IMR-90 (cell line): ENCODE measurements at regions of chr1 and their contacts with region 1.

Region 1: DNA sequence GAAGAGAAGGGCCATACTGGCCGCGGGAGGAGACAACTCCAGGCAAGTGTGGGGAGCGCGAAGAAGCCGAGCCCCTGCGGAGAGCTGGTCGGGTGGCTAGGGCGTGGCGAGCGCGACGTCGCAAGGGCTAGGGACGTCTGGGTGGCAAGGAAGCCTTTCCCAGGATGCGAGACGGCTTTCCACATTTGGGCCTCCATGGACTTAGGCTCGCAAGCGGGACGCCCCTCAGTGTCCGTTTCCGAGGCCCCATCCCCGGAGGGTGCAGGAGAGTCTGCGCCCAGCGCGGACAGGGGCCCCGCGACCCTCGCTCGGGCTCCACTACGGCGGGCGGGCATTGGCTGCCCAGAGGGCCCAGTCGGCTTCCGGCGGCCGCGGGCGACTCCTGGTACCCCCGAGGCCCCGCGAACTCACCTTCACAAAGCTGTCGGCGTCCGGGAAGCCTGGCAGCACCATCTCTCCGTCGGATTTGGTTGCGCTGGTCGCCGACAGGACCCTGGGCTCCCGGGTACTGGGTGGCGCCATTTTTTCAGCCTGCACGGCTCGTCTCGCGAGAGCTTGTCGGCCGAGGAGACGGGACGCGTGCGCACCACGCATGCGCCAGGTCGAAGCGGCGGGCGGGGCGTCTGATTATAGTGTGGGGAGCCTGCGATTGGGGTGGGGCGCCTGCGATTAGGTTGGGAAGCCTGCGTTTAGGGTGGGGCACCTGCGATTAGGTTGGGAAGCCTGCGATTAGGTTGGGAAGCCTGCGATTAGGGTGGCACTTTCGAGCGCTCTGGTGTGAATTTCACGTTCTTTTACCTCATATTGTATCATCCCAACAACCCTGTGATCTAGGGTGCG is at the start of gene EXOSC10:
- DNase-seq: peak; percentile 77
- ATAC-seq: peak; percentile 99
- H3K4me3 ChIP-seq: peak within 1 kb of the TSS; percentile 81
- H3K27ac ChIP-seq: peak within 1 kb of the TSS; percentile 85
- H3K4me1 ChIP-seq: 0 out of 2 replicates have a peak, but pooled peaks cover 2% of the 10 kb centered on the region
- H3K27me3 ChIP-seq: no peaks in the 10 kb centered on the region
- CTCF ChIP-seq: no peak
- POLR2A ChIP-seq: peak; percentile 67; the same call in 1 of the 2 replicates
- RAD21 ChIP-seq: no peak
- total RNA-seq, gene EXOSC10: 56.4 and 64.5 TPM in 2 replicates

Region 2: DNA sequence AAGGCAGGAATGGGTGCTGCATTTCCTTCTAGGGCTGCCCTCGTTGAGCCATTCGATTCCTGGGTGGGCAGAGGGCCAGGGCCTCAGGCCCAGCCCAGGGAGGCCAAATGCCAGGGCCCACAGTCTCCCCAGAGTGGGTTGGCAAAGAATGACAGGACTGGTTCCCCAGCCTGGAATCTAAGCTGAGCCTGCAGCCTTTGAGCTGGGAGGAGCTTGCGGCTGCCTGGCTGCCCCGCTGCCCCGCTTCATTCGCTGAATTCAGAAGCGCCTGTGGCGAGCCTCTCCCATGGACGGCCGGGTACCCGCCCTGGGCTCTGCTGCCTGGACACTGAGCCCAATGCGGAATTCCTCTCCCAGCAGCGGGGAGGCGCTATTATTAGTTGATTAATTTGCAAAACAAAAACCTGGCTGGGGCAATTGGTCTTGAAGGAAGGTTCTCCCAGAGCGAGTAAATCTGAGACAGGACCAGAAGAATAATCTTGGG is 119.4 kb before region 1 on chr1:
- CTCF ChIA-PET with region 1: no interaction called
- POLR2A ChIA-PET with region 1: no interaction called
- dilution Hi-C with region 1: no loop called
- in situ Hi-C with region 1: no loop called
- intact Hi-C with region 1: no loop called
- DNase-seq: peak; percentile 31
- ATAC-seq: peak; percentile 88
- H3K4me3 ChIP-seq: no peak overlapping the region
- H3K27ac ChIP-seq: no peak overlapping the region
- H3K4me1 ChIP-seq: peaks cover 1% of the 10 kb centered on the region; the same call in 1 of the 2 replicates
- H3K27me3 ChIP-seq: peaks cover 14% of the 10 kb centered on the region
- CTCF ChIP-seq: peak; percentile 32; the same call in 1 of the 2 replicates
- POLR2A ChIP-seq: no peak
- RAD21 ChIP-seq: no peak

Region 3: DNA sequence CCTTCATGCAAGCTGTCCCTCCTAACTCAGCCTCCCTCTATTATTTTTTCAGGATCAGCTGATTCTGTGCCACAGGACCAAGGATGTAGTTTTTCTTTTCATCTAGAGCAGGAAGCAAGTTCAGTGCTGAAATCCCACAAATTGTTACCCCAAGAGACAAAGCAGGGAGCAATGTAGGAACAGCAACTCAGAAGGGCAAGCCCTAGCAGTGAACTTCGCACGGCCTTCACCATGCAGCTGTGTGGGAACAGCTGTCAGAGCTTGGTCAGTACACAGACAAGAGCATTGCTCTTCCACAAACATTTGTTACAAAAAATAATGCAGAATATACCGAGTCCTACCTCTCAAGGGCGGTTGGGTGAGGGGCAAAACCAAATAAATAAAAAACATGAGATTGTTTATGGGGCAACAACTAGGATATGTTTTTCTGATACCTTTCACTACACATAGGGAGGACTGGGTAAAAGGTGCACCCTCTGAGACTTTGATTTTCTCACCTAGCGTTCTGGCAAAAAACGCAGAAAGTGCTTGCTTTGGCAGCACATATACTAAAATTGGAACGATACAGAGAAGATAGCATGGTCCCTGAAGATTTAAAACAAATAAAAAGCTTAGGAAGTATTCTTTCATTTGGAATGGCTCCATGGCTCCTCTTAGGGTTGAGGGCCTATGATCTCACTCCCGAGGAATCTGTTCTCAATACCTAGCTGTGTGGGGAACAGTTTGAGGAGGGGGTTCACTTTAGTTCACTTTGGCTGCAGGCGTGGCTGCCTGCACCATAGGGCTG is 52.5 kb after region 1 on chr1:
- CTCF ChIA-PET with region 1: no interaction called
- POLR2A ChIA-PET with region 1: no interaction called
- dilution Hi-C with region 1: no loop called
- in situ Hi-C with region 1: no loop called
- intact Hi-C with region 1: loop called (anchors 5 kb)
- DNase-seq: no peak
- ATAC-seq: peak; percentile 39; the same call in 1 of the 2 replicates
- H3K4me3 ChIP-seq: no peak overlapping the region
- H3K27ac ChIP-seq: no peak overlapping the region
- H3K4me1 ChIP-seq: peaks cover 5% of the 10 kb centered on the region
- H3K27me3 ChIP-seq: no peaks in the 10 kb centered on the region
- CTCF ChIP-seq: no peak
- POLR2A ChIP-seq: no peak
- RAD21 ChIP-seq: no peak

Region 4: DNA sequence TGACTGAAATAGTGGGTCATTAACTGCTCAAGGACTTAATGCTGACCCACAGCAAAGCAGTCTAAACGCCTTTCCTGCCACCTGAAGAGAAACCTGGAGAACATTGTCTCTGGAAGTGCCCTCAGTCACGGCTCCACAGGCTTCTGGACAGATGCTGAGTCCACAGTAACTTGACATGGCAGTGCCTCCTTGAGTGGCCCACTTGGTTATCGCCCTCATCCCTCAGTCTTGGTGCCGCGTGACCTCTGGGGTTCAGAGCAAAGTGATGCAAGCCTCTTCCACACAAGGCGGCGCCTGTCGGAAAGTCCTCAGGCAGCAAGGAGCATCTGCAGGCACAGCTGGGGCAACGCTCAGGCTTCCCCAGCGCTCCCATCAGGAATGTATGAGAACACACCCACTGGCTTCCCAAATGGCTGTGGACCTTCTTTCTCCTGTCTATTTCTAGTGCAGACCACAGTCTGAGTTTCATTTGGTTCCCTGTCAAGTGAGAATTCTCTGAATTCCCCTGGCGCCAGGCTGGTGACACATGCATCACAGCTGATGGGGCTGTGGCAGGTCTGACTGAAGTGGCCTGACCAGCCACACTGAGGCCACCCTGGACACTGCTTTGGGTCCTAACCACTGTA is 76.7 kb after region 1 on chr1:
- CTCF ChIA-PET with region 1: no interaction called
- POLR2A ChIA-PET with region 1: interaction called, 19 read pairs
- dilution Hi-C with region 1: no loop called
- in situ Hi-C with region 1: no loop called
- intact Hi-C with region 1: no loop called
- DNase-seq: peak; percentile 33
- ATAC-seq: peak; percentile 21; the same call in 1 of the 2 replicates
- H3K4me3 ChIP-seq: no peak overlapping the region
- H3K27ac ChIP-seq: no peak overlapping the region
- H3K4me1 ChIP-seq: peaks cover 17% of the 10 kb centered on the region
- H3K27me3 ChIP-seq: no peaks in the 10 kb centered on the region
- CTCF ChIP-seq: no peak
- POLR2A ChIP-seq: no peak
- RAD21 ChIP-seq: no peak

Region 5: DNA sequence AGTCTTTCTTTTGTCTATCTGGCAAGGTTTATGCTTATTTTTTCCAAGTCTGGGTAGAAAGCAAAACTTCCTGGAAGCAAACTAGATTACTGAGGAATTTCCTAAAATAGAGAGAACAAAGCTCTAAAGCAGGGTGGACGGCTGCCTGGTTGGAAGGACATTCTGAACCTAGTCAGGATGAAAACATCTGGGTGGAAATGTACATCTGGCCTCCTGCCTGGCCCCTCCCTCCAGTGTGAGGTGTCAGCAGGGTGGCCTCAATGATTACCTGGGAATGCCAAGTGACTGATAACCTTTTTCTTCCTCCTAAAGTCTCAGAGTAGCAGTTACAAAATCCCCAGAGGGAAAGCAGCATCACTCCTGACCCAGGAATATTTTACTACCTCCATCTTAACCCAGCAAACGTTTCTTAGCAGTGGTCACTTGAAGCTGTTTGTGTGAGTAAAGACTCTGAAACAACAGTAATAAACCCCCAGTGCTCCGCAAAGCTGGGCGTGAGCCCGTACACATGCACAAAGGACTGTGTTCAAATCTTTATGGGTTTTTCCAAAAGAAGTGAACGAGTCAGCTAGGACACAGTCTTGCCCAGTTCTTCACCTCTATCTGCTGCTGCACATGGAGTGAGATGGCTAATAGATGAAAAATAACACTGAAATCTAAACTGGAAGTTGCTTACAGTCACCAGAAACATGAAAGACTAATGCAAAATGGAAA is 108.5 kb after region 1 on chr1:
- CTCF ChIA-PET with region 1: no interaction called
- POLR2A ChIA-PET with region 1: no interaction called
- dilution Hi-C with region 1: no loop called
- in situ Hi-C with region 1: no loop called
- intact Hi-C with region 1: loop called (anchors 5 kb)
- DNase-seq: no peak
- ATAC-seq: no peak; the same call in 1 of the 2 replicates
- H3K4me3 ChIP-seq: no peak overlapping the region
- H3K27ac ChIP-seq: no peak overlapping the region
- H3K4me1 ChIP-seq: no peaks in the 10 kb centered on the region
- H3K27me3 ChIP-seq: no peaks in the 10 kb centered on the region
- CTCF ChIP-seq: no peak
- POLR2A ChIP-seq: no peak
- RAD21 ChIP-seq: no peak

Region 6: GRCh38 chr1:11355559-11356475 is 256.3 kb after region 1 on chr1:
- CTCF ChIA-PET with region 1: no interaction called
- POLR2A ChIA-PET with region 1: no interaction called
- dilution Hi-C with region 1: no loop called
- in situ Hi-C with region 1: no loop called
- intact Hi-C with region 1: no loop called
- DNase-seq: no peak
- ATAC-seq: no peak
- H3K4me3 ChIP-seq: no peak overlapping the region
- H3K27ac ChIP-seq: no peak overlapping the region
- H3K4me1 ChIP-seq: no peaks in the 10 kb centered on the region
- H3K27me3 ChIP-seq: peaks cover 32% of the 10 kb centered on the region
- CTCF ChIP-seq: no peak
- POLR2A ChIP-seq: no peak
- RAD21 ChIP-seq: no peak

Region 7: DNA sequence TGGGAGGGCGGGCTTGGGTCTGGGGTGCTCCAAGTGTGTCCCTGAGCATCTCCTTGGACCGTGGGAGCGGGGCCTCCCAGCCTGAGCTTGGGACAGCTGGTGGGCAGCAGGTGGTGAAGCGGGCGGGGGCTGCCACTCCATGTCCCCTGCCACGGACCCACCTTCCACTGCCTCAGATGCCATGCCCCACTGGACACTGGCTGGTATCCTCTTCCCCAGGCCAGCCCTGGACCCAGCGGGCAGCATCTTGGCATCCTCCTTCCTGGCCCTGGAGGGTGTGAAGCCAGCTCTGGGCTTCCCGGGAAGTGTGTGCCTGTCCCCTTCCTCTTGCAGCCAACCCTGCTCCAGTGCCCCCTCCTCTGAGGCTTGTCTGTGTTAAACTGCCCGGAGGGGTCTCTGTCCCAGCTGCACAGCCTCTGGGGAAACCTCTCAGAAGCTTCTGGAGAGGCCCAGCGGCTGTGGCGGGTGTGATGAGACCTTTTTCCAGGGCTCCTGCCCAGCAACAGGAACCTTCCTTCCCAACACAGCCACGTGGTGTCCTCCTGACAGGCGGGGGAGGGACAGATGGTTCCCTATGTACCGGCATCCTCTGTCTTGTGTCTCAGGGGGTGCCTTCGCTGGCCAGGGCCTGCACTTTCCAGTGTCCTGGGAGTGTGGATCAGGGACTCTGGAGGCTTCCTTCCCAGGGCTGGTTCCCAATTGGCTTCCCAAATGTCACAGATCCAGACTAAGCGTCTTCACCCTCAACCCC is 297.8 kb after region 1 on chr1:
- CTCF ChIA-PET with region 1: no interaction called
- POLR2A ChIA-PET with region 1: no interaction called
- dilution Hi-C with region 1: no loop called
- in situ Hi-C with region 1: no loop called
- intact Hi-C with region 1: no loop called
- DNase-seq: no peak
- ATAC-seq: no peak
- H3K4me3 ChIP-seq: no peak overlapping the region
- H3K27ac ChIP-seq: no peak overlapping the region
- H3K4me1 ChIP-seq: no peaks in the 10 kb centered on the region
- H3K27me3 ChIP-seq: peaks cover 14% of the 10 kb centered on the region; the same call in 1 of the 2 replicates
- CTCF ChIP-seq: no peak
- POLR2A ChIP-seq: no peak
- RAD21 ChIP-seq: no peak